ENCODE measurements at regions of chr3 and their contacts with region 1.

Region 1: GRCh38 chr3:52144034-52144795 is 10.0 kb downstream of the POC1A start:
- DNase-seq: peak; percentile 93
- H3K4me3 Mint-ChIP-seq: no peak overlapping the region
- H3K27ac Mint-ChIP-seq: no peak overlapping the region
- H3K4me1 Mint-ChIP-seq: peaks cover 14% of the 10 kb centered on the region
- H3K27me3 Mint-ChIP-seq: no peaks in the 10 kb centered on the region

Region 2: GRCh38 chr3:52056968-52057805 is 87.0 kb before region 1 on chr3:
- CTCF ChIA-PET with region 1: interaction called, 17 read pairs
- DNase-seq: peak; percentile 100
- H3K4me3 Mint-ChIP-seq: peak overlapping the region; percentile 86
- H3K27ac Mint-ChIP-seq: peak overlapping the region; percentile 95
- H3K4me1 Mint-ChIP-seq: peaks cover 40% of the 10 kb centered on the region
- H3K27me3 Mint-ChIP-seq: peaks cover 9% of the 10 kb centered on the region

Region 3: GRCh38 chr3:52123106-52123725 is 21.0 kb before region 1 on chr3:
- CTCF ChIA-PET with region 1: interaction called, 14 read pairs
- DNase-seq: peak; percentile 81
- H3K4me3 Mint-ChIP-seq: no peak overlapping the region
- H3K27ac Mint-ChIP-seq: no peak overlapping the region
- H3K4me1 Mint-ChIP-seq: peaks cover 25% of the 10 kb centered on the region
- H3K27me3 Mint-ChIP-seq: no peaks in the 10 kb centered on the region

Region 4: DNA sequence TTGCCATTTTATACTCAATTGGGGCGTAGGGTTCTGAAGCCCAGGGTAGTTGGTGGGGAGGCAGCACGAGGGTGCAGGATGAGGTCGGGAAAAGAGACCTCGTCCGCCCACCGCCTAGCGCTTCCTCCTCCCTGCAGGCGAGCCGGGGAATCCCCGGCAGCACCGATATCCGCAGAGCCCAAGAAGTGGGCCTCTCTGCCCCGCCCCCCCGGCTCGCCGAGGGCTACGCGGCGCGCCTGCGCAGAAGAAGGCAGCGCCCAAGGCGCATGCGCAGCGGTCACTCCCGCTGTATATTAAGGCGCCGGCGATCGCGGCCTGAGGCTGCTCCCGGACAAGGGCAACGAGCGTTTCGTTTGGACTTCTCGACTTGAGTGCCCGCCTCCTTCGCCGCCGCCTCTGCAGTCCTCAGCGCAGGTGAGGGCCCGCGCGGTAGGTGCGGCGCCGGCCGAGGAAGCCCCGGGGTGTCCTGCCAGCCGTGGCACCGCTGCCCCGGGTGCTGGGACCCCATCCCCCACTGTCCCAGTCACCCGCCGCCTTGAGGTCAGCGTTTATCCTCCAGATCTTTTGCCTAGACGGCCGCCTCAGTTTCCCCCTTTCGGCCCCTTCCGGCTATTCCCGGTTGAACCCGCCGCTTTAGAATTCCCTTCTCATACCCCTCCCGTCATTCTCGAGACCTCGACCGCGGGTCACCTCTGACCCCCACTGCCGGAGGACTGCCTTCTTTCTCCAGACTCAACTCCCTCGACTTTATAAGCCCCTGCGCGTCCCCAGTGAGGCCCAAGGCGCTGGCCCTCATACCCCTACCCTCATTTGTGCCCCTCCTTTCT is 53.8 kb after region 1 on chr3 and contains the start of gene ALAS1:
- CTCF ChIA-PET with region 1: no interaction called
- DNase-seq: peak; percentile 95
- H3K4me3 Mint-ChIP-seq: peak within 1 kb of the TSS; percentile 97
- H3K27ac Mint-ChIP-seq: peak within 1 kb of the TSS; percentile 88
- H3K4me1 Mint-ChIP-seq: peaks cover 52% of the 10 kb centered on the region
- H3K27me3 Mint-ChIP-seq: peaks cover 31% of the 10 kb centered on the region

Region 5: GRCh38 chr3:52253314-52254304 is 109.4 kb after region 1 on chr3:
- CTCF ChIA-PET with region 1: no interaction called
- DNase-seq: peak; percentile 91
- H3K4me3 Mint-ChIP-seq: peak overlapping the region; percentile 73
- H3K27ac Mint-ChIP-seq: peak overlapping the region; percentile 99
- H3K4me1 Mint-ChIP-seq: peaks cover 96% of the 10 kb centered on the region
- H3K27me3 Mint-ChIP-seq: no peaks in the 10 kb centered on the region

Measured in activated naive CD4-positive, alpha-beta T cell treated with anti-CD3 and anti-CD28 coated beads, Interleukin-2, amount 10 ng/mL, durations not matched to agents 7 days and 5 days (primary cell).